CD8-positive, alpha-beta T cell (primary cell): ENCODE measurements at regions of chr19 and their contacts with region 1.

Region 1: DNA sequence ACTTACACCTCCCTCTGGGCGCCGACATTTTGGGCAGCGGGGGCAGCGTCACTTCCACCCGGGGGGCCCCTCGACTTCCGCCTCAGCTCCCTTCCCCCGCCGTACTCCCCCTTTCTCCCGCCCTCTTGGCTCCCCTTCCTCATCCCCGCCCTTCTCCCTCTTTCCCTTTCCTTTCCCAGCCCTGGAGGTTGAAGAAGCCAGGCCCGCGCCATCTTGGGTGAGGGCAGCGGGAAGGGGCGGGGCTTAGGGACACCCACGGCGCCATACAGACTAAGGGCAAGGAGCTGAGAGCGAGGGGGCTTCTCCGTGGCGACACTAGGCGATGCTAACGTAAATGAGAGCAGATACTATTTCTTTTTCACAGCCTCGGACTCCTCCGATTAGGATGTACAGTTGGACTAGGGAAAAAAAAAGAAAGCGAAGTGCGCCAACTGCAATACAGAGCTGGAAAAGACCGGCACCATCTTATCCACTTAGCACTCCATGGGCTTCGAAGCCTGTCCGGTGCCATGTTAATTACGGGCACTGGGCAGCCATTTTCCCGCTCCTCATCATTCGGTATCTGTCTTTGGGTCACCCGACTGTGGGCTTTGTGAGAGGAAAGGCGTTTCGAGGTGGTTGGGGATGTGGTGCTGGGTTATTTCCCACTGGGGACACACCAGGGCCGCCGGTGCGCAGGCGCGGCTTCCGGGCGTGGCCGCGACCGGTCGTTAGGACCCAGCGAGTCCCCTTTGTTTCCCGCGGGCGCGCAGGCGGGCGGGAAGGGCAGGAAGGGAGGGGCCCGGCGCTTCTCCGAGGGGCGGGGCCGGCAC is at the start of gene FIZ1:
- DNase-seq: peak; percentile 90 to 98 (median 95)
- ATAC-seq: peak; percentile 69
- H3K4me3 ChIP-seq: peak within 1 kb of the TSS; percentile 80 to 81
- H3K4me3 Mint-ChIP-seq: peak within 1 kb of the TSS; percentile 100
- H3K27ac ChIP-seq: peak within 1 kb of the TSS; percentile 75 to 95
- H3K27ac Mint-ChIP-seq: peak within 1 kb of the TSS; percentile 99
- H3K4me1 ChIP-seq: peaks cover 14% of the 10 kb centered on the region
- H3K4me1 Mint-ChIP-seq: peaks cover 29% of the 10 kb centered on the region
- H3K27me3 ChIP-seq: no peaks in the 10 kb centered on the region
- H3K27me3 Mint-ChIP-seq: no peaks in the 10 kb centered on the region
- CTCF ChIP-seq: no peak
- total RNA-seq, gene FIZ1: 6.7 to 8.4 TPM

Region 2: GRCh38 chr19:55279770-55280643 is 319.7 kb before region 1 on chr19 and contains the start of gene HSPBP1:
- CTCF ChIA-PET with region 1: no interaction called
- POLR2A ChIA-PET with region 1: interaction called, 3 read pairs
- intact Hi-C with region 1: loop called in 1 of 2 experiments (anchors 1 kb)
- DNase-seq: peak; percentile 87 to 98 (median 95)
- ATAC-seq: peak; percentile 86
- H3K4me3 ChIP-seq: peak within 1 kb of the TSS; percentile 73 to 85
- H3K4me3 Mint-ChIP-seq: peak within 1 kb of the TSS; percentile 96
- H3K27ac ChIP-seq: peak within 1 kb of the TSS; percentile 89 to 90
- H3K27ac Mint-ChIP-seq: peak within 1 kb of the TSS; percentile 98
- H3K4me1 ChIP-seq: peaks cover 32% of the 10 kb centered on the region
- H3K4me1 Mint-ChIP-seq: peaks cover 44% of the 10 kb centered on the region
- H3K27me3 ChIP-seq: no peaks in the 10 kb centered on the region
- H3K27me3 Mint-ChIP-seq: no peaks in the 10 kb centered on the region
- CTCF ChIP-seq: no peak
- total RNA-seq, gene HSPBP1: 18.8 to 18.9 TPM

Region 3: GRCh38 chr19:55319785-55320184 is 279.9 kb before region 1 on chr19:
- CTCF ChIA-PET with region 1: no interaction called
- POLR2A ChIA-PET with region 1: no interaction called
- intact Hi-C with region 1: no loop called
- DNase-seq: no peak
- ATAC-seq: no peak
- H3K4me3 ChIP-seq: no peak overlapping the region
- H3K4me3 Mint-ChIP-seq: no peak overlapping the region
- H3K27ac ChIP-seq: no peak overlapping the region
- H3K27ac Mint-ChIP-seq: no peak overlapping the region
- H3K4me1 ChIP-seq: no peaks in the 10 kb centered on the region
- H3K4me1 Mint-ChIP-seq: no peaks in the 10 kb centered on the region
- H3K27me3 ChIP-seq: no peaks in the 10 kb centered on the region
- H3K27me3 Mint-ChIP-seq: peaks cover 7% of the 10 kb centered on the region
- CTCF ChIP-seq: no peak

Region 4: GRCh38 chr19:55580628-55581144 is 19.0 kb before region 1 on chr19 and contains the start of gene ZNF579:
- CTCF ChIA-PET with region 1: interaction called, 3 read pairs
- POLR2A ChIA-PET with region 1: interaction called, 16 read pairs
- intact Hi-C with region 1: loop called (anchors 1 to 2 kb)
- DNase-seq: peak; percentile 39 to 86 (median 75)
- ATAC-seq: peak; percentile 71
- H3K4me3 ChIP-seq: peak within 1 kb of the TSS; percentile 70 to 90
- H3K4me3 Mint-ChIP-seq: peak within 1 kb of the TSS; percentile 91
- H3K27ac ChIP-seq: peak within 1 kb of the TSS; percentile 67 to 81
- H3K27ac Mint-ChIP-seq: peak within 1 kb of the TSS; percentile 93
- H3K4me1 ChIP-seq: peaks cover 20% of the 10 kb centered on the region
- H3K4me1 Mint-ChIP-seq: peaks cover 27% of the 10 kb centered on the region
- H3K27me3 ChIP-seq: no peaks in the 10 kb centered on the region
- H3K27me3 Mint-ChIP-seq: no peaks in the 10 kb centered on the region
- CTCF ChIP-seq: no peak
- total RNA-seq, gene ZNF579: 5.7 to 6.1 TPM

Region 5: GRCh38 chr19:55624109-55625003 is 24.7 kb after region 1 on chr19 and contains the start of gene ZNF784:
- CTCF ChIA-PET with region 1: interaction called, 4 read pairs
- POLR2A ChIA-PET with region 1: interaction called, 17 read pairs
- intact Hi-C with region 1: loop called (anchors 1 kb)
- DNase-seq: peak; percentile 87 to 97 (median 93)
- ATAC-seq: peak; percentile 76
- H3K4me3 ChIP-seq: peak within 1 kb of the TSS; percentile 67 to 88
- H3K4me3 Mint-ChIP-seq: peak within 1 kb of the TSS; percentile 91
- H3K27ac ChIP-seq: peak within 1 kb of the TSS; percentile 72 to 92
- H3K27ac Mint-ChIP-seq: peak within 1 kb of the TSS; percentile 98
- H3K4me1 ChIP-seq: peaks cover 50% of the 10 kb centered on the region
- H3K4me1 Mint-ChIP-seq: peaks cover 56% of the 10 kb centered on the region
- H3K27me3 ChIP-seq: no peaks in the 10 kb centered on the region
- H3K27me3 Mint-ChIP-seq: no peaks in the 10 kb centered on the region
- CTCF ChIP-seq: no peak
- total RNA-seq, gene ZNF784: 11.7 to 12.2 TPM

Region 6: DNA sequence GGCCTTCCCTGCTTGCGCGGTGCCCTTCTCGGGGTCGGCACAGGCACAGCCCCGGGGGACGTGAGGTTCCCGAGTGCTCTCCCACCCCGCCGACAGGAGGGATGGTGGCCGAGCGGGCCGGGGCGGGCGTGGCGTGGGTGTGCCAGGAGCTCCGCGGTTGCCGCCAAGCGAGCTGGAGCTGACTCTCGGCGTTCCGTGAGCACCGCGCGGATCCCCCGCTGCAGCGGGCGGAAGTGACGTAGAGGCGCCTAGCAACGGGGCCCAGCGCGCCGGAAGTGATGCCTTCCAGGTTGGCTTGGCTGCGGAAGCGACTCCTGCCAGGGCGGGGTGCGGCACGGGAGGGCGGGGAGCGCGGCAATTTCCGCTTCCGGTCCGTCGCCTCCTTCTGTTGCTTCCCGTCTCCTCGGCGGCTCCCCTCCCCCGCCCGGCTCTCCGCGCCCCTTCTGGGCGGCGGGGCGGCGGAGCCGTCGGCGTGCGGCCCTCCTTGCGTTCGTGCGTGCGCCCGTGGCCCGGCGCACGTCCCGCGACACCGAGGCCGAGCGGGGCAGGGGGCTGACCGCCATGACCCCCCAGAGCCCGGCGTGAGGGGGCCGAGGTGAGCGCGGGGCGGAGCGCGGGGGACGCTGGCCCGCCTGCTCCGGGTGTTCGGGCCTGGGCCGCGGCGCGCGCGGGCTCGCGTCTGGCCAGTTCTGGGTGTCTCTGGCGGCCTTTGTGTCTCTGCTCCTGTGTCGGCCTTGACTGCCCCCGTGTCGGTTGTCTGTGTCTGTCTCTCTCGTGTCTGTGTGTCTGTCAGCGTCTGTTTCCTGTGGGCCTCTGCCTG is 75.4 kb after region 1 on chr19 and contains the start of gene EPN1:
- CTCF ChIA-PET with region 1: no interaction called
- POLR2A ChIA-PET with region 1: no interaction called
- intact Hi-C with region 1: loop called (anchors 1 kb)
- DNase-seq: peak; percentile 96 to 99 (median 97)
- ATAC-seq: peak; percentile 91
- H3K4me3 ChIP-seq: peak within 1 kb of the TSS; percentile 80
- H3K4me3 Mint-ChIP-seq: peak within 1 kb of the TSS; percentile 93
- H3K27ac ChIP-seq: peak within 1 kb of the TSS; percentile 88 to 91
- H3K27ac Mint-ChIP-seq: peak within 1 kb of the TSS; percentile 97
- H3K4me1 ChIP-seq: peaks cover 51% of the 10 kb centered on the region
- H3K4me1 Mint-ChIP-seq: peaks cover 61% of the 10 kb centered on the region
- H3K27me3 ChIP-seq: no peaks in the 10 kb centered on the region
- H3K27me3 Mint-ChIP-seq: no peaks in the 10 kb centered on the region
- CTCF ChIP-seq: no peak
- total RNA-seq, gene EPN1: 41.1 to 45.2 TPM

Region 7: GRCh38 chr19:55801416-55801815 is 201.7 kb after region 1 on chr19:
- CTCF ChIA-PET with region 1: no interaction called
- POLR2A ChIA-PET with region 1: no interaction called
- intact Hi-C with region 1: no loop called
- DNase-seq: no peak
- ATAC-seq: no peak
- H3K4me3 ChIP-seq: no peak overlapping the region
- H3K4me3 Mint-ChIP-seq: no peak overlapping the region
- H3K27ac ChIP-seq: no peak overlapping the region
- H3K27ac Mint-ChIP-seq: no peak overlapping the region
- H3K4me1 ChIP-seq: no peaks in the 10 kb centered on the region
- H3K4me1 Mint-ChIP-seq: no peaks in the 10 kb centered on the region
- H3K27me3 ChIP-seq: no peaks in the 10 kb centered on the region
- H3K27me3 Mint-ChIP-seq: peaks cover 27% of the 10 kb centered on the region
- CTCF ChIP-seq: no peak

Region 8: GRCh38 chr19:56314562-56315077 is 714.9 kb after region 1 on chr19 and contains the start of gene ZSCAN5A:
- CTCF ChIA-PET with region 1: no interaction called
- POLR2A ChIA-PET with region 1: no interaction called
- intact Hi-C with region 1: loop called in 1 of 2 experiments (anchors 10 kb)
- DNase-seq: peak; percentile 93 to 99 (median 98)
- ATAC-seq: peak; percentile 73
- H3K4me3 ChIP-seq: peak within 1 kb of the TSS; percentile 87 to 88
- H3K4me3 Mint-ChIP-seq: peak within 1 kb of the TSS; percentile 95
- H3K27ac ChIP-seq: peak within 1 kb of the TSS; percentile 96 to 100
- H3K27ac Mint-ChIP-seq: peak within 1 kb of the TSS; percentile 99
- H3K4me1 ChIP-seq: peaks cover 21% of the 10 kb centered on the region
- H3K4me1 Mint-ChIP-seq: peaks cover 26% of the 10 kb centered on the region
- H3K27me3 ChIP-seq: no peaks in the 10 kb centered on the region
- H3K27me3 Mint-ChIP-seq: no peaks in the 10 kb centered on the region
- CTCF ChIP-seq: no peak
- total RNA-seq, gene ZSCAN5A: 4.6 to 7.0 TPM